ENCODE measurements at regions of chr10 and their contacts with region 1.

Region 1: GRCh38 chr10:116688241-116688711 is 54.1 kb downstream of the HSPA12A start:
- DNase-seq: peak; percentile 57
- H3K4me3 ChIP-seq: no peak overlapping the region
- H3K27ac ChIP-seq: no peak overlapping the region
- H3K4me1 ChIP-seq: peaks cover 30% of the 10 kb centered on the region
- H3K27me3 ChIP-seq: no peaks in the 10 kb centered on the region
- CTCF ChIP-seq: no peak
- POLR2A ChIP-seq: no peak

Region 2: DNA sequence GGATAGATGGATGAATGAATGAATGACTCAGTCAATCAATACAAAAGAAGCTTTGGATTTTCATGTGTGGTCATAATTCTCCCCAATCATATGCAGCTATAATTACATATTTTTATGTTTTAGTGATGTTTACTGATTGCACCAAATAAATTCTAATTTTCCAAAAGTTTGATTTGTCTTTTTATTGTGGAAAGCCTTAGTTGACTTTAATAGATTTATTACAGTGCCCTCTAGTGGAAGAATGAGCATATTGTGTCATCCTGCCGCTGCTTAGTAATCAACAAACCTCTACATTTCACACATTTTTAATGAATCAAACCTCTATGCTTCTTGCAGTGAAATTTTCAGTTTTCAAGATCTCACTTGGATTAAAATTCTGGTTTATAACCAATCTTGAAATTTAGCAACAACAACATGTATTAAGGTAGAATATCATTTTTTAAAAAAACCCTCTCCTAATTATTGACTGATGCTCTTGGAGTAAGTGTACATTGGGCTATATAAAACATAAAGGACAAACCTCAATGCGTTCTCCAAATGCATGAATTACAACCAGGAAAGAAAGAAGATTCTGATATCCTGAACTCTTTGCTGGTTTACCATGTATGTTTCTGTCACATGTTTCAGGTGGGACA is 198.1 kb before region 1 on chr10:
- intact Hi-C with region 1: no loop called
- DNase-seq: no peak
- H3K4me3 ChIP-seq: no peak overlapping the region
- H3K27ac ChIP-seq: no peak overlapping the region
- H3K4me1 ChIP-seq: no peaks in the 10 kb centered on the region
- H3K27me3 ChIP-seq: no peaks in the 10 kb centered on the region
- CTCF ChIP-seq: peak in 2 of 3 experiments; percentile 19 to 61
- POLR2A ChIP-seq: no peak

Region 3: DNA sequence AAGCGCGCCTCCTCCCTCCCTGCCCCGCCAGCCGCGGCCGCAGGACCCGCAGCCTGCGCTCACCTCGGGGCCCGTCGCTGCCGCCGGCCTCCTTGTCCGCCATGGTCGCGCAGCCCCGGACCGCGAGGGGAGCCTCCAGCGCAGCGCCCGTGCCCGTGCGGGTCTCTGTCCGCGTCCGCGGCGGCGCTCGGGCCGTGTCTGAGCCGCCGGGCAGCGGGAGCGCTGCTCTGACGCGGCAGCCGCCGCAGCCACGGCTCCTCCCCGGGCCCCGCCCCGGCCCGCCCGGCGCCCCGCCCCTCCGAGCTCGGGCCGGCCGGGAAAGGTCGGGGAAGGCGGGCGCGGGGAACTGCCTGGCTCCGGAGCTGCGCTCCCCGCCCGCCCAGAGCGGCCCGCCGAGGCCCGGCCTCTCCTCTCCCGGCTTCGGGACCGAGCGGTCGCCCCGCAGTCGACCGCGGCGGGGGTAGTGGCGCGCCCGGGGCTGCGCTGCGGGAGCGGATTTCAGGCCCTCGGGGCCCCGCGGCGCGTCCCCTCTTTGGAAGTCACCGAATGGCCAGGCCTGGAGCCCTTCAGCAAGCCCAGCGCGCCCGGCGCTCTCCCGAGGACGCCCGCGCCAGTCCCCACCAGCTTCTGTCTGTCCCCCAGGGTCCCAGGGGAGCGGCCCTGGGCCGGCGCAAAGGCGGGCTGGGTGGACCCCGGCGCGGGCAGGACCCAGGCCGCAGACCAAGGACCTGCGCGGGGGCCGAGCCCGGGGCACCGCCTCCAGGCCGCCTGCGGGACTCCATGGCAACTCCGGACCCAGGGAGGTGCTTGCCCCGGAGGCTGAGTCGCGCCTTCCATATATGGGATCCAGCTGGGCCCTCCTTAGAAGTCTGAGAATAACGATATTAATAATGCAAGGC is 54.3 kb after region 1 on chr10 and contains the start of gene HSPA12A:
- intact Hi-C with region 1: loop called (anchors 10 kb)
- DNase-seq: peak; percentile 79
- H3K4me3 ChIP-seq: peak within 1 kb of the TSS; percentile 80 to 91
- H3K27ac ChIP-seq: peak within 1 kb of the TSS; percentile 74 to 85
- H3K4me1 ChIP-seq: peaks cover 13% of the 10 kb centered on the region
- H3K27me3 ChIP-seq: no peaks in the 10 kb centered on the region
- CTCF ChIP-seq: peak in 1 of 3 experiments; percentile 21
- POLR2A ChIP-seq: no peak
- total RNA-seq, gene HSPA12A: 28.4 to 34.6 TPM

Region 4: DNA sequence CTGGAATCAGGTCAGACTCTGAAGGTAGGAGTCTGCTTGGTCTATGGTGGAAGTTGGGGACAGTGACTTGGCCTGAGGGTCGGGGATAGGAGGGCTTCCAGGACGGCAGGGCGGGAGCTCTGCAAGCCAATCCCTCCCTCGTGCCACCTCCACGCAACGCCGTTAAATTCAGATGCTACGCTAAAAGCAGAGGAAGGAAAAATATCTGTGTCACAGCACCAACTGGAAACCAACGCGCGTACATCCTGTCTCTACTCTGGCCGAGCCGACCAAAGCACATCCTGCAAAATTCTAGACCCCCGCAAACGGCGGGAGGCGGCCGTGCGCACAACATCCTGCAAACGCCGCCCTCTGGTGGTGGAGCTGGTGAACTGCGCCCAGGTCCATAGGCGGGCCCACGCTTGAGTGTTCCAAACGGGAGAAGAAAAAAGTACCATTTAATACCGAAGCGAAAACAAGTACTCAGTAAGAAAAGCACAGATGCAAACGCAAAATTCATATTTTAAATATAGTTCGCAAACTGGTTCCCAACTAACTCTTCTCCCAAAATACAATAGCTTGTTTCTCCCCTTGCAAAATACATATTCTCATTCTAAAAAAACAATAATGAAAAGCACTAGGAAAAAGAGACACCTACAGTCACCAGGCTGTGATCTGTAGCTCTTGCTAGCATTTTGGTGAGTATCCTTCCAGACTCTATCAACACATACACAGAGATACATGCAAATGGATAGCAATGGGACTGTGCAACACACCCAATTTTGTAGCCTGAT is 99.8 kb after region 1 on chr10:
- intact Hi-C with region 1: loop called (anchors 5 kb)
- DNase-seq: peak; percentile 92
- H3K4me3 ChIP-seq: peak overlapping the region in 1 of 2 donors; percentile 9
- H3K27ac ChIP-seq: no peak overlapping the region
- H3K4me1 ChIP-seq: no peaks in the 10 kb centered on the region
- H3K27me3 ChIP-seq: no peaks in the 10 kb centered on the region
- CTCF ChIP-seq: peak; percentile 98 to 100 (median 98)
- POLR2A ChIP-seq: no peak

Measured in testis (tissue), 5 donors.